Ascending aorta (tissue), 2 donors: ENCODE measurements at regions of chr18 and their contacts with region 1.

Region 1: DNA sequence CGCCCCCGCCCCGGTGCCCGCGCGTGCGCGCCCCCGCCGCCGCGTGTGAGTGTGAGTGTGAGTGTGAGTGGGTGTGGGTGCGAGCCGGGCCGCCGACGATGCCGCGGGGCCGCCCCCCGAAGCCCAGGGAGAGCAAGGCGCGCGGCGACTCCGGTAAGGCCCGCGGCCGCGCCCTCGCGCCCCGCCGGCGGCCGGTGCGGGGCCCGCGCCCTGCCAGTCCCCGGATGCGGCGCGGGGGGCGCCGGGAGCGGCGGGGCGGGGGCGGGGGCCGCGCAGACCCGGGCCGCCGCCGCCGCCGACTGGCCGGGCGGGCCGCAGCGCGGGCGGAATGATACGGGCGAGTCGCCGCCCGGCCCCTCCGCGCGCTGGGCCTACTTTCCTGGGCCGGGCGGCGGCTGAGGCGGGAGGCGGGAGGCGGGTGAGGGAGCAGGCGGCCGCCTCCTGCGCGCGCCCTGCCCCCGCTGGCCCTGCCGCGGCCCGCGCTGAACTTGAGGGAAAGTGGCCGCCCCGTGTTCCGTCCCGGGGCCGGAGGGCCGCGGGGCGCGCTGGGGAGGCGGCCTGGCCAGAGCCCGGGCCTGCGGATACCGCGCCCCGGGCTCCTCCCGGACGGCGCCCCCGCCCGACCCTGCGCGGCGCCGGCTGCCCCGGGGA is at the start of gene ZNF236:
- DNase-seq: peak in 1 of 2 donors; percentile 84
- H3K4me3 ChIP-seq: peak within 1 kb of the TSS; percentile 78 to 93
- H3K27ac ChIP-seq: peak within 1 kb of the TSS; percentile 92 to 96
- H3K4me1 ChIP-seq: peaks cover 0 to 9% of the 10 kb centered on the region in 2 donors
- H3K27me3 ChIP-seq: no peaks in the 10 kb centered on the region
- CTCF ChIP-seq: no peak
- total RNA-seq, gene ZNF236: 9.7 TPM

Region 2: DNA sequence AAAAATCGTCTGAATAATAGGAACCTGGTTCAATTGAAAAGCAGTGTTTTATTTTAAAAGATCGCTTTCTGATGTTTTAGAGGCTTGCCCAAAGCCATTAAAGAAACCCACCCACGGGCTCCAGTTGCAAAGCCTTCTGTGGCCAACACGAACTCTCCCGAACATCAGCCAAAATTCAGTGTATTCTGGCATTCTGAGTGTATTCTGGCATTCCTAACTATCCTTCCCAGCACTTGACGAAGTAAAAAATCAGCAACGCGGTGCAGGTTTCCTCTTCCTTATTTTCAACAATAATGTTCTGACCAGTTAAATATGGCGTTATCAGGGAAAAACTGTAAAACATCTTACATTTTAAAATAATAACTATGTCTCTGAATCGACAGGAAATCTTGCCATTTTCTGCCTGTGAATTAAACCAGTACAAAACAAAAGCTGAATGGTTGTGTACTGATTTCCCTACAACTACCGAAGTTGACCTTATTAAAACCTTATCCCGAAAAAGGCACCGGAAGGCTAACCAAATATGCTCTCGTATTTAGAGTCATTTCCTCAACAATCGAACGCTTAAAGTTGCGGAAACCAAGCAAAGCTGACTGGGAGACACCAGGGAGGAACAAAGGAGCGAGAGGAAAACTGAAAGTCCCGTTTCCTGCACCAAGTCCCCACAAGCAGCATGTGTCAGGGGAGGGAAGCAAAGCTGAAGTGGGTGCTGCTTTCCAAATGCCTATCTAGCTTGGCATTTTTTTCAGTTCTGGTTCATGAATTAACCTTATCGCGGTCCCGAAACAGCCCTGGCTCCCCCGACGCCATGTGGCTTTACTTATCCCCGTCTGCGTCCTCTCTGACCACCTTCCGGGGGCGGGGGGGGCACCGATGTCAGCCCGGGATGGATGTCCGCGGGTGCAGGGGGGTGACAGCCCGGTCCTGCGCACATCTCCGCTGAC is 371.9 kb before region 1 on chr18:
- intact Hi-C with region 1: loop called (anchors 10 kb)
- DNase-seq: peak in 1 of 2 donors; percentile 68
- H3K4me3 ChIP-seq: peak overlapping the region; percentile 59 to 62
- H3K27ac ChIP-seq: peak overlapping the region; percentile 58 to 73
- H3K4me1 ChIP-seq: peaks cover 1 to 13% of the 10 kb centered on the region in 2 donors
- H3K27me3 ChIP-seq: no peaks in the 10 kb centered on the region
- CTCF ChIP-seq: no peak

Region 3: GRCh38 chr18:76518123-76518859 is 304.3 kb before region 1 on chr18:
- intact Hi-C with region 1: no loop called
- DNase-seq: no peak
- H3K4me3 ChIP-seq: peak overlapping the region; percentile 36 to 41
- H3K27ac ChIP-seq: no peak overlapping the region
- H3K4me1 ChIP-seq: no peaks in the 10 kb centered on the region
- H3K27me3 ChIP-seq: no peaks in the 10 kb centered on the region
- CTCF ChIP-seq: no peak

Region 4: DNA sequence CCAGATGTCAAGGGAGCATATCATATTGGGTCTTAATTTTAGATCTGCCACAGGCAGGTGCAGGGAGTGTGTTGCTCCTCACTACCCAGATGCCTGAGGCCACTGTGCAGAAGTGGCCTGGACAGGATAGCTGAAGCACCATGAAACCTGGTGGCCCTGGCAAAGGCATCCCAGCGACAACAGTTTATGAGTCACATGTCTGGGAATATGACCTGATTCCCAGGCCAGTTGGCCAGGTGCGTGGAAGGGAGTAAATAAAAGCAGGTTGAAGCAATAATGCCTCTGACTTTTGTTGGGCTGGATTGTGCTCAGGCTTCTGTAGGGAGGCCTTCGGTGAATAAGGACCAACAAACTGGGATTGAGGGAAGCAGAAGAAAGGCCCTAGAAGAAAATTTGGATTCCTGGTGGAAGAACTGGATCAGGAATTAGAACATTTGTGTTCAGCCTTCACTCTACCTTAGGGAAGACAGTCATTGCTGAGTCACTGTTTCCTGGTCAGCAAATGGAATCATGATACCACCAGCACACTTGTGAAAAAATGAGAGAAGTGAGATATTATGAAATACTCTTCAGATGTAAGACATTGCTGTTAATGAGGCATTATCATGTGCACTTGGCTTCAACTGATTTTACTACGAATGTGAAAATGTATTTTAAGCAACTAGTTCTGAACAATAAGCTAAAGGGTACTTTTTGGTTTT is 249.2 kb before region 1 on chr18:
- intact Hi-C with region 1: no loop called
- DNase-seq: no peak
- H3K4me3 ChIP-seq: no peak overlapping the region
- H3K27ac ChIP-seq: no peak overlapping the region
- H3K4me1 ChIP-seq: no peaks in the 10 kb centered on the region
- H3K27me3 ChIP-seq: no peaks in the 10 kb centered on the region
- CTCF ChIP-seq: no peak

Region 5: DNA sequence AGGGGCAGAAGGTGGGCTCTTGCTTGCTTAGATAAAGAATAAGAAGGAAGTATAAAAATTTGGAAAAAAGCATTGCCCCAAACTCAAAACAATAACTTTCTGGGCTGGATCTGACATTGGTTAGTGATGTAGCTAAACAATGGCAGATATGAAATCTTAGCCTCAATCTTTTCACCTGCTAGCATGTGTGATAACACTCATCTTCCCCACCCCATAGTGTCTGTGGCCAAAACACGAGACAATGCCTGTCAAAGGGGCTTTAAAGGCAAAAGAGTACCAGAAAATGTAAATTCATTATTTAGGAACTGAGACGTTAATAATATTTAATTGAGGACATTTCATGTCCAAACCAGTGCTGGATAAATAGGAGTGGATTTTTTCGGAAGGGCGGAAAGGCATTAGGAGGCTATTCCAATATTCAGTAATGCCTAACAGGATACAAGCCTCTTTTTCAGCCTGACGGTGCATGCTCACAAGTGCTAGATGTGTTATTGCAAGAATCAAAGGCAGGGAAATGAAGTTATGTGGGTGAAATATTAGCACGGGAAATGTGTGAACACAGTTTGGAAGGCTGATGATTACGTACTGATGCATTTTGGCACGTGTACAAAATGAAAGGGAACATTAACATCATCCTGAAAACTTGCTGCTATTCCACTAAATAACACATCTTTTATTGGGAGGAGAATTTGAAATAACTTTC is 822.7 kb after region 1 on chr18:
- intact Hi-C with region 1: no loop called
- DNase-seq: no peak
- H3K4me3 ChIP-seq: no peak overlapping the region
- H3K27ac ChIP-seq: no peak overlapping the region
- H3K4me1 ChIP-seq: no peaks in the 10 kb centered on the region
- H3K27me3 ChIP-seq: no peaks in the 10 kb centered on the region
- CTCF ChIP-seq: no peak